Activated T-helper 2 cell treated with anti-CD3 and anti-CD28 coated beads, Interferon-gamma antibody, Interleukin-2, Interleukin-4, amounts not matched to agents 10 μg/mL and 5 μg/mL and 100 μg/mL, durations not matched to agents 14 hours and 24 hours and 36 hours (primary cell): ENCODE measurements at regions of chr3 and their contacts with region 1.

Region 1: DNA sequence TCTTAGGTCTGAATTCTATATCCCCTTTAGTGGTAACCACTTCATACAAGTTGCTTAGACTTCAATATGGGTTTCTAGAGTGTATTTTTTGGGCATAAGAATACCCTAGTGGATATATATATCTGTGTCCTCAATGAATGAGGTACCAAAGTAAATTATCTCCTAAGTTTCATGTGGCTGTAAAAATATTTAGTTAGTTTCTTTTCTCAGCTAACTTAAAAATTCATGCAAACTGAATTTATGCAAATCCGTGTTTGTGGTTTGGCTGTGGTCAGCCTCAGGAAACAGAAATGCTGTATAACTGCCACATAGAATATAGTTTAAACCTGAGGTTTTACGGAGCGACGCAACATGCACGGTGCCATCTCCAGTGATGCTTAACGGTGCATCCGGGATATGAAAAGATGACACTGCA is 80.3 kb downstream of the PEX5L start:
- DNase-seq: peak; percentile 59
- H3K4me3 Mint-ChIP-seq: peak overlapping the region; percentile 26
- H3K27ac Mint-ChIP-seq: peak overlapping the region; percentile 14
- H3K4me1 Mint-ChIP-seq: peaks cover 49% of the 10 kb centered on the region
- H3K27me3 Mint-ChIP-seq: peaks cover 12% of the 10 kb centered on the region

Region 2: GRCh38 chr3:179369621-179370020 is 586.8 kb before region 1 on chr3:
- intact Hi-C with region 1: no loop called
- DNase-seq: no peak
- H3K4me3 Mint-ChIP-seq: no peak overlapping the region
- H3K27ac Mint-ChIP-seq: no peak overlapping the region
- H3K4me1 Mint-ChIP-seq: no peaks in the 10 kb centered on the region
- H3K27me3 Mint-ChIP-seq: no peaks in the 10 kb centered on the region

Region 3: DNA sequence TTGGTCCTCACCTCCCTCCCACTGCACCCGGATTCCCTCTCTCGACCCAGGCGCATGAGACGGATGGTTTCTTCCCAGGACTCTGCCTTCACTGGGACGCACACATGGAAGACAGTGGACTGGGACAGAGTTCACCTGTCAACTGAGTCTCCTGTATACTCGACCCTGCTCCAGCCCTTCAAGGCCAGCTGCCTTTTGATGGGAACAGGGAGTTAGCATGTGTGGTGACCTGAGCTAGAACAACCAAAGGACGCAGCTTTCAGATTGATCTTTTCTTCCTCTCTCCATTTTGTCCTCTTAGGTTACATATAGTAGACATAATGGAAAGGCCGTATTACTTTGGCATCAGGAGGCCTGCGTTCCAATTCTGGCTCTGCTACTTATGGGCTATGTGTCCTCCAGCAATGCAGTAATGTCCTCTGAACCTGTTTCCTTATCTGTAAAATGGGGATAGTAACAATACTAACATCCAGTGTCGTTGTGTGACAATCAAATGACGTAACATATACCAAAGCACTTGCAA is 13.8 kb before region 1 on chr3:
- intact Hi-C with region 1: loop called (anchors 2 kb)
- DNase-seq: no peak
- H3K4me3 Mint-ChIP-seq: no peak overlapping the region
- H3K27ac Mint-ChIP-seq: no peak overlapping the region
- H3K4me1 Mint-ChIP-seq: no peaks in the 10 kb centered on the region
- H3K27me3 Mint-ChIP-seq: peaks cover 32% of the 10 kb centered on the region

Region 4: GRCh38 chr3:179967622-179968021 is 11.2 kb after region 1 on chr3:
- intact Hi-C with region 1: loop called (anchors 1 kb)
- DNase-seq: no peak
- H3K4me3 Mint-ChIP-seq: no peak overlapping the region
- H3K27ac Mint-ChIP-seq: peak overlapping the region; percentile 35
- H3K4me1 Mint-ChIP-seq: peaks cover 24% of the 10 kb centered on the region
- H3K27me3 Mint-ChIP-seq: peaks cover 12% of the 10 kb centered on the region

Region 5: DNA sequence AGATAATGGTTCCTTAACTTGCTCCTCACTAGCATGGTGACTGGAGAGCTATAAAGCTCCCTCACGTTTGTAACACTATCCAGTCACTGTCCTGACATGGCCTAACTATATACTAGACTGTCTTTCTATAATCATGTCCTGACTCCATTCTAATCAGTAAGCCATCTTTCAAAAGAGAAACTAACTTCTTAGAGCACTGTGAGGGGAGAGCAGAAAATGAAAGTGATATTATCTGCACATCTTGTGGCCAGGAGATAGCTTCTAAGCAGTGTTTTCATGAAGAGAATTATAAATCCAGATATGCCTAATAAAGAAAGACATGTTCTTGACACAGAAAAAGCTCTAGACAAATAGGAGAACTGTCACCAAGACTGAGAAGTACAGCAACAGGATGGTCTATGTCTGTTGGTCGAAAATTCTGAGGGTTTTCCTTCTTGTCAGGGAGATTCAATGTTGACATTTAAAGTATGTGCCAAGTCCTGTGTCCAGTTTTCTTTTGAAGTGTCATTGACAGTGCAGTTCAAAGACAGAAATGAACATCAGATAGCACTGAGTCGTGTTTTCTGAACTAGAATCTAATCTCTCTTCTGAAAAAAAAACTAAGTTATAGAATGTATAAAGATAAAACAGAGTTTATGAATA is 310.9 kb after region 1 on chr3:
- intact Hi-C with region 1: loop called (anchors 10 kb)
- DNase-seq: no peak
- H3K4me3 Mint-ChIP-seq: no peak overlapping the region
- H3K27ac Mint-ChIP-seq: no peak overlapping the region
- H3K4me1 Mint-ChIP-seq: peaks cover 18% of the 10 kb centered on the region
- H3K27me3 Mint-ChIP-seq: no peaks in the 10 kb centered on the region